ENCODE measurements at regions of chrX and their contacts with region 1.

Region 1: GRCh38 chrX:153953342-153953830 is 8.9 kb upstream of the RENBP start:
- DNase-seq: peak; percentile 39 to 50
- H3K4me3 ChIP-seq: no peak overlapping the region
- H3K27ac ChIP-seq: no peak overlapping the region
- H3K4me1 ChIP-seq: no peaks in the 10 kb centered on the region
- H3K27me3 ChIP-seq: no peaks in the 10 kb centered on the region
- CTCF ChIP-seq: peak; percentile 77 to 99 (median 87)
- POLR2A ChIP-seq: no peak

Region 2: DNA sequence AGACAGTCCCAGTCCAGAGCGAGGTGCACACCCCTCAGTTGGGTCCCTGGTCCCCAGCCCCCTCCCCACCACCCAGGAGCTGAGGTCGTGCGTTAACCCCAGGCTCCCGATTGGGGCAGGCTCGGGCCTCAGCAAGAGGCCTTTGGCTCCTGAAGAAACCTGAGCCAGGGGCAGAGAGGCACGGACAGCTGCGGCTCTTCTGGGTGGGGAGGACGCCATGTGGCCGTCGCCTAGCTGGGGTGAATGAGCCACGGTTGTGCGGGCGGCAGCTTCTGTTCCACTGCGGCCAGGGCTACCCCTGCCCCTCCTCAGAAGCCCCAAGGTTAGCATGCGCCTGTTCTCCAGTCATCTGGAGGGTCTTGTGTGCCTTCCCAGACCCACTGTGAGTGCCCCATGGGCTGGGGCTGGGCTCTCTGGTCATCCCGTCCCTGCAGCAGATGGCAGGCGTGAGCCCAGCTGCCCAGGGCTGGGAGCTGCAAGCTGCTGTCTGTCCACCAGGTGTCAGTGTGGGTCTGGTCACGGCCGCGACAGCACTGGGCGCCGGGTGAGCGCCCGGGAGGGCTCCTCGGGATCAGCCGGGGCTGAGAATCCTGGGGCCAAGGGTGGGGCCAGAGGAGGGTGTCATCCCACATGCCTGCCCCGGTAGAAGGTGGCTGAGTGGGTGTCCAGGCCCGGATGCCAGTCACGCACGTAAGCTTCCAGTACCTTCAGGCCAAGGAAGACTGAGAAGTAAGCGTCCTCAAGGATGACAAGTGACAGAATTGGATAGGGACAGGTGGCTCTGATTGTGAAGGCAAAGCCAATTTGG is 414.0 kb before region 1 on chrX:
- intact Hi-C with region 1: loop called (anchors 10 kb)
- DNase-seq: peak; percentile 56 to 59
- H3K4me3 ChIP-seq: no peak overlapping the region
- H3K27ac ChIP-seq: no peak overlapping the region
- H3K4me1 ChIP-seq: no peaks in the 10 kb centered on the region
- H3K27me3 ChIP-seq: no peaks in the 10 kb centered on the region
- CTCF ChIP-seq: peak; percentile 53 to 78 (median 62)
- POLR2A ChIP-seq: no peak

Region 3: DNA sequence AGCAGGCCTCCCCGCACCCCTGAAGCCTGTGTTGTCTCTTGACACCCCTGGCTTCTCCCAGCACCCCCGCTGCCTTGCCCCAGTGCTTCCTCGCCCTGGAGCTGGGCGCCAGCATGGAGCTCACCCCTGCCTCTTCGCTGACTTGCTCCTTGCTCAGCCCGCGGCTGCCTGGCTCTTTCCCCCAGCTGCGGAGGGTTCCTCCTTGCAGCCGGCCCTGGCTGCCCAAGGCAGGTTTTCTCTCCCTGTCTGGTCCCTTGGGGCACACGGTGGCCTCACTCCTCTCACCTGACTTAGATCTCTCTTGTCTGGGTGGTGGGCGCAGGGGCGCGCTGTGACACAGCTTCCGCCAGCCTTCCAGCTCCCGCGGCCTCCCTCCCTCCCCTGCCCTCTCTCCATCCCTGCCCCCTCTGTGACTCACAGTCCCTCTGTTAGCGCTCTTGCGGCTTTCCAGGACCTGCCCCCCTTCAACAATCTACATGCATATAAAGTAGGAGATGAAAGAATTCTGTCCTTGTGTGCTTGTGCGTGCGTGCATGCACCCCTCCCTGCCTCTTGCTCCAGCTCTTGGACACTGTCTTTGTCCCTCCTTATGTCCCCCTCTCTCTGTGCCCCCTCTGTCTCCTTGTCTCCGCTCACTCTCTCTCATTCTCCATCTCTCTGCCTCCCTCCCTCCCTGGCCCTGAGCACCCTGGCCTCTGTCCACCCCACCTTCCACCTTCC is 187.1 kb before region 1 on chrX:
- intact Hi-C with region 1: loop called (anchors 5 kb)
- DNase-seq: no peak
- H3K4me3 ChIP-seq: no peak overlapping the region
- H3K27ac ChIP-seq: no peak overlapping the region
- H3K4me1 ChIP-seq: no peaks in the 10 kb centered on the region
- H3K27me3 ChIP-seq: no peaks in the 10 kb centered on the region
- CTCF ChIP-seq: no peak
- POLR2A ChIP-seq: no peak

Measured in thyroid gland (tissue), 4 donors.